ENCODE measurements at regions of chr11 and their contacts with region 1.

Region 1: GRCh38 chr11:87405843-87406242 is 368.1 kb downstream of the TMEM135 start:
- DNase-seq: no peak
- ATAC-seq: no peak
- H3K4me3 ChIP-seq: no peak overlapping the region
- H3K27ac ChIP-seq: no peak overlapping the region
- H3K4me1 ChIP-seq: no peaks in the 10 kb centered on the region
- H3K27me3 ChIP-seq: no peaks in the 10 kb centered on the region
- CTCF ChIP-seq: no peak
- EP300 ChIP-seq: no peak
- POLR2A ChIP-seq: no peak
- RAD21 ChIP-seq: no peak

Region 2: GRCh38 chr11:87331273-87331672 is 74.6 kb before region 1 on chr11:
- CTCF ChIA-PET with region 1: no interaction called
- POLR2A ChIA-PET with region 1: no interaction called
- RAD21 ChIA-PET with region 1: no interaction called
- SMC1A ChIA-PET with region 1: no interaction called
- in situ Hi-C with region 1: no loop called
- intact Hi-C with region 1: no loop called
- DNase-seq: no peak
- ATAC-seq: no peak
- H3K4me3 ChIP-seq: no peak overlapping the region
- H3K27ac ChIP-seq: no peak overlapping the region
- H3K4me1 ChIP-seq: no peaks in the 10 kb centered on the region
- H3K27me3 ChIP-seq: no peaks in the 10 kb centered on the region
- CTCF ChIP-seq: no peak
- EP300 ChIP-seq: no peak
- POLR2A ChIP-seq: no peak
- RAD21 ChIP-seq: no peak

Region 3: DNA sequence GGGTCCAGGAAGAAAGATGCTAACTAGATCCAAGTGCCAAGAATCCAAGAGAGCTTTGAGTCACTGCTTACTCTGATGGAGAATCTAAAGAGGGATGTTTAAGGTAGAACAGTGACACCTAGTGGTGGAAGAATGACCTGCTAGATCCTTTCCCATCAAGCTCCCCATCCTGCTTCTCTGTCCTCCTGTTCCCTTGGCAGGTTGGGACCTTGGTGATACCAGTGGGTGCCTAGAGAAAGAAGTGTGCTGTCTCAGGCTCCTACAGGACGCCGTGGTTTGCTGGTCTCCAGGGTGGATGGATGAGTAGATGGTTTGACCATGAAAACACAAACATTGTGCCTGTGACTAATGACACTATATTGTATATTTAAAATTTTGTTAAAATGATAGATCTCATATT is 15.6 kb after region 1 on chr11:
- CTCF ChIA-PET with region 1: interaction called, 10 read pairs
- POLR2A ChIA-PET with region 1: no interaction called
- RAD21 ChIA-PET with region 1: no interaction called
- SMC1A ChIA-PET with region 1: interaction called, 4 read pairs
- in situ Hi-C with region 1: no loop called
- intact Hi-C with region 1: no loop called
- DNase-seq: peak; percentile 27
- ATAC-seq: peak; percentile 95
- H3K4me3 ChIP-seq: no peak overlapping the region
- H3K27ac ChIP-seq: no peak overlapping the region
- H3K4me1 ChIP-seq: no peaks in the 10 kb centered on the region
- H3K27me3 ChIP-seq: no peaks in the 10 kb centered on the region
- CTCF ChIP-seq: peak; percentile 72 to 73 (median 73)
- EP300 ChIP-seq: no peak
- POLR2A ChIP-seq: no peak
- RAD21 ChIP-seq: peak; percentile 64

Region 4: GRCh38 chr11:87463486-87464102 is 57.8 kb after region 1 on chr11:
- CTCF ChIA-PET with region 1: no interaction called
- POLR2A ChIA-PET with region 1: no interaction called
- RAD21 ChIA-PET with region 1: no interaction called
- SMC1A ChIA-PET with region 1: no interaction called
- in situ Hi-C with region 1: no loop called
- intact Hi-C with region 1: no loop called
- DNase-seq: no peak
- ATAC-seq: peak; percentile 57
- H3K4me3 ChIP-seq: no peak overlapping the region
- H3K27ac ChIP-seq: no peak overlapping the region
- H3K4me1 ChIP-seq: no peaks in the 10 kb centered on the region
- H3K27me3 ChIP-seq: no peaks in the 10 kb centered on the region
- CTCF ChIP-seq: peak; percentile 15 to 42 (median 31); a peak in 4 of 6 replicates
- EP300 ChIP-seq: no peak
- POLR2A ChIP-seq: no peak
- RAD21 ChIP-seq: peak; percentile 68

Measured in GM12878 (cell line).